CD14-positive monocyte (primary cell): ENCODE measurements at regions of chr2 and their contacts with region 1.

Region 1: GRCh38 chr2:207625018-207625907 is at the start of gene METTL21A:
- DNase-seq: peak; percentile 79 to 93 (median 91)
- H3K4me3 ChIP-seq: peak within 1 kb of the TSS; percentile 79 to 95 (median 83)
- H3K4me3 Mint-ChIP-seq: peak within 1 kb of the TSS; percentile 95 to 97
- H3K27ac ChIP-seq: peak within 1 kb of the TSS; percentile 95 to 97
- H3K27ac Mint-ChIP-seq: peak within 1 kb of the TSS; percentile 95 to 98 (median 97)
- H3K4me1 ChIP-seq: peaks cover 47 to 57% of the 10 kb centered on the region in 2 donors
- H3K4me1 Mint-ChIP-seq: peaks cover 50% of the 10 kb centered on the region
- H3K27me3 ChIP-seq: no peaks in the 10 kb centered on the region
- H3K27me3 Mint-ChIP-seq: no peaks in the 10 kb centered on the region
- CTCF ChIP-seq: peak; percentile 61
- polyA plus RNA-seq, gene METTL21A: 13.5 to 47.0 (median 44.7) TPM

Region 2: DNA sequence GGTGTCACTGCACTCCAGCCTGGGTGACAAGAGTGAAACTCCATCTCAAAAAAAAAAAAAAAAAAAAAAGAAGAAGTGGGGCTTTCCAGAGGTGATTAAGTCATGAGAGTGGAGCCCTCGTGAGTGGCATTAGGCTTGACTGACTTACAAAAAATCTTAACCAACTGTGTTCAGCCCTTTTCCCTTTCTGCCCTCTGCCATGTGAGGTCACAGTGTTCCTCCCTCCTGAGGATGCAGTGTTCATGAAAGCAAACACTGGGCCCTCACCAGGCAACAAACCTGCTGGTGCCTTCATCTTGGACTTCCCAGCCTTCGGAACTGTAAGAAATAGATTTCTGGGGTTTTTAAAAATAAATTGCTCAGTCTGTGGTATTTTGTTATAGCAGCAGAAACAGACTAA is 36.9 kb after region 1 on chr2:
- intact Hi-C with region 1: loop called in 1 of 2 experiments (anchors 5 kb)
- DNase-seq: peak; percentile 86 to 96 (median 91)
- H3K4me3 ChIP-seq: no peak overlapping the region
- H3K4me3 Mint-ChIP-seq: no peak overlapping the region
- H3K27ac ChIP-seq: peak overlapping the region; percentile 80 to 86
- H3K27ac Mint-ChIP-seq: peak overlapping the region; percentile 89 to 97 (median 95)
- H3K4me1 ChIP-seq: peaks cover 8 to 11% of the 10 kb centered on the region in 2 donors
- H3K4me1 Mint-ChIP-seq: peaks cover 18% of the 10 kb centered on the region
- H3K27me3 ChIP-seq: no peaks in the 10 kb centered on the region
- H3K27me3 Mint-ChIP-seq: peaks cover 0 to 2% (median 0%) of the 10 kb centered on the region in 3 donors
- CTCF ChIP-seq: no peak

Region 3: DNA sequence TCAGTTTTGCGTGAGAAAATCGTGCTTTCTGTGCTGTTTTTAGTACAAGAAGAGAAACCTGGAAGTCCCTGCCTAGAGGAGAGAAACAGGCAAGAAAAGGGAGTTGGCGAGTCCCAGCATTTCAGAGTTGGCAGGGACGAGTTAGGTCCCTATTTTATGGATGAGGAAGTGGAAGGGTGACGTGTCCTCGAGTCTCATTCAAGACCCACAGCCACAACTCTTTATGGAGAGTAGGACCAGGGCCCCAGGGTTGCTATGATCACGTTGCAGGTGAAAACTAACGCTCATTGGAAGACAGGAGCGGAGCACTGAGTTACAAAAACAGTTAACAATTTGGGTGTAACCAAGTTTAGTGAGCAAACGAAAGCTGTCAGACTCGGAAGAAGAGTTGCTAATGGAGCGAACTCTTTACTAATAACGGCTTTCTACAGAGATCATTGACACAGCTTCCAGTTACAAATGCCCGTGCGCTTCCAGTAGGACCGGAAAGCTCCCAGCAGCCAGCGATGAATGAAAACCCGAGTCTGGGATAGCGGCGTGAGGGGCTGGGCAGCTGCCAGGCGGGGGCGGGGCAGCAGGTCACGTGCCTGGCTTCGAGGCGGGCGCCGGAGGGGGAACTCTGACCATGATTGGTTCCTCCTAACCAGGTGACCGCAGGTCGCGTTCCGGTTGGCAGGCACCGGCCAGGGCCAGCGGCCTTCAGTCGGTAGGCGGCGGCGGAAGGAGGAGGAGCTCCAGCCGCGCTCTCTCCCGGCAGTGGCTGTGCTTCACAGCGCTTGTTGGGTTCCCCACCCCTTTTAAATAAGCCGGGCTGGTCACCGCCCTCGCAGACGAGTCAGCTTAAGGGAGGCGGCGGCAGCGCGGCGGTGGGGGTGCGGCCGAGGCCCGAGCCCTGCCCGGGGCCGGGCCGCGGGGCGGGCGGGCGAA is 85.8 kb after region 1 on chr2 and contains the start of gene CCNYL1:
- intact Hi-C with region 1: loop called (anchors 2 to 5 kb)
- DNase-seq: peak; percentile 99
- H3K4me3 ChIP-seq: peak within 1 kb of the TSS; percentile 92 to 97 (median 94)
- H3K4me3 Mint-ChIP-seq: peak within 1 kb of the TSS; percentile 95 to 99
- H3K27ac ChIP-seq: peak within 1 kb of the TSS; percentile 89 to 98
- H3K27ac Mint-ChIP-seq: peak within 1 kb of the TSS; percentile 96 to 99 (median 98)
- H3K4me1 ChIP-seq: peaks cover 25 to 31% of the 10 kb centered on the region in 2 donors
- H3K4me1 Mint-ChIP-seq: peaks cover 38% of the 10 kb centered on the region
- H3K27me3 ChIP-seq: no peaks in the 10 kb centered on the region
- H3K27me3 Mint-ChIP-seq: peaks cover 0 to 3% (median 0%) of the 10 kb centered on the region in 3 donors
- CTCF ChIP-seq: no peak
- polyA plus RNA-seq, gene CCNYL1: 4.1 to 10.6 (median 4.6) TPM

Region 4: GRCh38 chr2:207847807-207848544 is 222.7 kb after region 1 on chr2:
- intact Hi-C with region 1: no loop called
- DNase-seq: no peak
- H3K4me3 ChIP-seq: no peak overlapping the region
- H3K4me3 Mint-ChIP-seq: no peak overlapping the region
- H3K27ac ChIP-seq: peak overlapping the region in 1 of 2 donors; percentile 6
- H3K27ac Mint-ChIP-seq: peak overlapping the region in 4 of 7 donors; percentile 12 to 68 (median 26)
- H3K4me1 ChIP-seq: peaks cover 7 to 14% of the 10 kb centered on the region in 2 donors
- H3K4me1 Mint-ChIP-seq: peaks cover 12% of the 10 kb centered on the region
- H3K27me3 ChIP-seq: no peaks in the 10 kb centered on the region
- H3K27me3 Mint-ChIP-seq: no peaks in the 10 kb centered on the region
- CTCF ChIP-seq: no peak

Region 5: GRCh38 chr2:208040199-208041171 is 415.2 kb after region 1 on chr2:
- intact Hi-C with region 1: loop called in 1 of 2 experiments (anchors 10 kb)
- DNase-seq: peak; percentile 54 to 76 (median 69)
- H3K4me3 ChIP-seq: no peak overlapping the region
- H3K4me3 Mint-ChIP-seq: no peak overlapping the region
- H3K27ac ChIP-seq: no peak overlapping the region
- H3K27ac Mint-ChIP-seq: peak overlapping the region in 2 of 7 donors; percentile 7 to 43
- H3K4me1 ChIP-seq: no peaks in the 10 kb centered on the region
- H3K4me1 Mint-ChIP-seq: peaks cover 8% of the 10 kb centered on the region
- H3K27me3 ChIP-seq: no peaks in the 10 kb centered on the region
- H3K27me3 Mint-ChIP-seq: no peaks in the 10 kb centered on the region
- CTCF ChIP-seq: peak; percentile 75